Activated naive CD4-positive, alpha-beta T cell treated with anti-CD3 and anti-CD28 coated beads for 36 hours (primary cell): ENCODE measurements at regions of chr5 and their contacts with region 1.

Region 1: GRCh38 chr5:60843936-60844905 is at the start of gene ELOVL7:
- DNase-seq: peak; percentile 68
- H3K4me3 Mint-ChIP-seq: peak within 1 kb of the TSS; percentile 79
- H3K27ac Mint-ChIP-seq: no peak within 1 kb of the TSS
- H3K4me1 Mint-ChIP-seq: peaks cover 8% of the 10 kb centered on the region
- H3K27me3 Mint-ChIP-seq: peaks cover 43% of the 10 kb centered on the region
- total RNA-seq, gene ELOVL7: 0.30 to 0.31 TPM

Region 2: GRCh38 chr5:60677844-60678664 is 166.2 kb before region 1 on chr5:
- CTCF ChIA-PET with region 1: interaction called, 4 read pairs
- intact Hi-C with region 1: loop called (anchors 2 kb)
- DNase-seq: no peak
- H3K4me3 Mint-ChIP-seq: no peak overlapping the region
- H3K27ac Mint-ChIP-seq: no peak overlapping the region
- H3K4me1 Mint-ChIP-seq: peaks cover 2% of the 10 kb centered on the region
- H3K27me3 Mint-ChIP-seq: no peaks in the 10 kb centered on the region

Region 3: GRCh38 chr5:60903356-60903755 is 59.1 kb after region 1 on chr5:
- CTCF ChIA-PET with region 1: no interaction called
- intact Hi-C with region 1: no loop called
- DNase-seq: no peak
- H3K4me3 Mint-ChIP-seq: no peak overlapping the region
- H3K27ac Mint-ChIP-seq: no peak overlapping the region
- H3K4me1 Mint-ChIP-seq: no peaks in the 10 kb centered on the region
- H3K27me3 Mint-ChIP-seq: no peaks in the 10 kb centered on the region

Region 4: DNA sequence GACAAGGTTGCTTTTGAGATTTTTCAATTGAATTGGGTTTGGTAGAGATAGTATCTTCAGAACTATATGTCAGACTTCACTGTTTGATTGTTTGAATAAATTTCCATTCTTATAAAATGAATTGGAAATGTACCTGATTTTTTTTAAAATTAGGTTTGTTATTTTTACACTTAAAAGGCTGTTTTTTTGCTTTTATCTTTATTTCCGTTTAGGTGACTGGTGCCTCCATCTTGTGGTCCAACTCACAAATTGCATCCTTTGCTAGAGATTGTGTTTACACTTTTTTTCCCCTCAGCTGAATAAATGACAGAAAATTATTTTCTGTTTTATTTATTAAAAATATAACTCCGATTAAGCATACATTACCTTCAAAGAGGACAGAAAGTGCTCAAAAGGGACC is 116.4 kb after region 1 on chr5:
- CTCF ChIA-PET with region 1: no interaction called
- intact Hi-C with region 1: no loop called
- DNase-seq: peak; percentile 30
- H3K4me3 Mint-ChIP-seq: no peak overlapping the region
- H3K27ac Mint-ChIP-seq: no peak overlapping the region
- H3K4me1 Mint-ChIP-seq: peaks cover 6% of the 10 kb centered on the region
- H3K27me3 Mint-ChIP-seq: no peaks in the 10 kb centered on the region